Activated naive CD4-positive, alpha-beta T cell treated with anti-CD3 and anti-CD28 coated beads, Interleukin-2, amount 10 ng/mL, durations not matched to agents 7 days and 5 days (primary cell): ENCODE measurements at regions of chr12 and their contacts with region 1.

Region 1: GRCh38 chr12:118164798-118165486 is 29.0 kb downstream of the PEBP1 start:
- DNase-seq: no peak
- H3K4me3 Mint-ChIP-seq: no peak overlapping the region
- H3K27ac Mint-ChIP-seq: no peak overlapping the region
- H3K4me1 Mint-ChIP-seq: peaks cover 6% of the 10 kb centered on the region
- H3K27me3 Mint-ChIP-seq: no peaks in the 10 kb centered on the region

Region 2: DNA sequence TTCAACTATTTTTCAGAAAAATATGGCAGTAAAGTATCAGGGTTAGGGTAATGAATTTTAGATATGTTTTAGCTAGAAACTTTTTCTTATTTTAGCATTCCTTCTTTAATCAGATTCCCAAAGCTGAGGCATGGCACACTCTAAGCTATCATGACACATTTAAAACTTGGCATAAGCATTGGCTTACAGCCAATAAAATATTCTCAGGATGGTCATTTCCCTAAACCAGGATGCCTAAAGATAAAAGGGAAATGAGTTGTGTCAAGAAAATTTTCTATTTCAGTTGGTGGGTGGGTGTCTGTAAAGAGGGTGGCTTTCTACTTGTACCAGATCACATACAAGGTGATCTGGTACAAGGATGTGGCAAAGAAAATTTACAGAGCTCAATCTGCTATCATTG is 18.8 kb after region 1 on chr12:
- CTCF ChIA-PET with region 1: interaction called, 23 read pairs
- DNase-seq: no peak
- H3K4me3 Mint-ChIP-seq: no peak overlapping the region
- H3K27ac Mint-ChIP-seq: no peak overlapping the region
- H3K4me1 Mint-ChIP-seq: peaks cover 6% of the 10 kb centered on the region
- H3K27me3 Mint-ChIP-seq: no peaks in the 10 kb centered on the region